Mammary epithelial cell (primary cell): ENCODE measurements at regions of chr12 and their contacts with region 1.

Region 1: GRCh38 chr12:55817346-55818139 is at the starts of genes ORMDL2 and SARNP:
- DNase-seq: peak; percentile 100
- H3K4me3 ChIP-seq: peak within 1 kb of the TSS; percentile 76 to 95 (median 90)
- H3K27ac ChIP-seq: peak within 1 kb of the TSS; percentile 93
- H3K4me1 ChIP-seq: peaks cover 18% of the 10 kb centered on the region
- H3K27me3 ChIP-seq: no peaks in the 10 kb centered on the region
- CTCF ChIP-seq: no peak
- total RNA-seq, gene ORMDL2: 24.3 to 91.3 TPM
- total RNA-seq, gene SARNP: 34.7 to 72.9 TPM

Region 2: GRCh38 chr12:55548756-55549155 is 268.8 kb before region 1 on chr12:
- CTCF ChIA-PET with region 1: no interaction called
- dilution Hi-C with region 1: no loop called
- in situ Hi-C with region 1: no loop called
- intact Hi-C with region 1: no loop called
- DNase-seq: no peak
- H3K4me3 ChIP-seq: no peak overlapping the region
- H3K27ac ChIP-seq: no peak overlapping the region
- H3K4me1 ChIP-seq: no peaks in the 10 kb centered on the region
- H3K27me3 ChIP-seq: no peaks in the 10 kb centered on the region
- CTCF ChIP-seq: no peak

Region 3: GRCh38 chr12:55829967-55830600 is 12.5 kb after region 1 on chr12:
- CTCF ChIA-PET with region 1: no interaction called
- dilution Hi-C with region 1: no loop called
- in situ Hi-C with region 1: no loop called
- intact Hi-C with region 1: loop called (anchors 1 kb)
- DNase-seq: no peak
- H3K4me3 ChIP-seq: peak overlapping the region; percentile 81 to 88 (median 83)
- H3K27ac ChIP-seq: peak overlapping the region; percentile 75
- H3K4me1 ChIP-seq: peaks cover 8% of the 10 kb centered on the region
- H3K27me3 ChIP-seq: no peaks in the 10 kb centered on the region
- CTCF ChIP-seq: no peak

Region 4: DNA sequence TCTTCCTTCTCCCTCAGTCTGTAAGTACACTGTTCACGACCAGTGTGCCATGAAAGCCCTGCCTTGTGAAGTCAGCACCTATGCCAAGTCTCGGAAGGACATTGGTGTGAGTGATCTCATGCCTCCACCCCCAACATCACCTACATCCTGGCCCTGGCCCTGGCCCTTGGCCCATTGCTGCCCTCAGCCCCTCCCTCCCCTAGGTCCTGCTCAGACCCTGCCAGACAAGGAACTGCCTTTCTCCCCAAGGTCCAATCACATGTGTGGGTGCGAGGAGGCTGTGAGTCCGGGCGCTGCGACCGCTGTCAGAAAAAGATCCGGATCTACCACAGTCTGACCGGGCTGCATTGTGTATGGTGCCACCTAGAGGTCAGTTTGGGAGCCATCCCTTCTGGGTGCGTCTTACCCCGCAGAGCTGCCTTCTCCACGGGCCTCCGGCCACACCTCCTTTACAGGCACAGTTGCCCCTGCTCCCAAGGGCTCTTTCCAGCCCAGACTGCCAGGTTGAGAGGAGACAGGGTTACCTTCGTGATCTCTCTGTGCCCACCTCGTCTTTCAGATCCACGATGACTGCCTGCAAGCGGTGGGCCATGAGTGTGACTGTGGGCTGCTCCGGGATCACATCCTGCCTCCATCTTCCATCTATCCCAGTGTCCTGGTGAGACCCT is 122.7 kb after region 1 on chr12:
- CTCF ChIA-PET with region 1: no interaction called
- dilution Hi-C with region 1: no loop called
- in situ Hi-C with region 1: loop called in 1 of 2 experiments (anchors 5 kb)
- intact Hi-C with region 1: loop called (anchors 1 kb)
- DNase-seq: peak; percentile 82
- H3K4me3 ChIP-seq: no peak overlapping the region
- H3K27ac ChIP-seq: peak overlapping the region; percentile 97
- H3K4me1 ChIP-seq: peaks cover 48% of the 10 kb centered on the region
- H3K27me3 ChIP-seq: no peaks in the 10 kb centered on the region
- CTCF ChIP-seq: peak; percentile 88 to 94

Region 5: DNA sequence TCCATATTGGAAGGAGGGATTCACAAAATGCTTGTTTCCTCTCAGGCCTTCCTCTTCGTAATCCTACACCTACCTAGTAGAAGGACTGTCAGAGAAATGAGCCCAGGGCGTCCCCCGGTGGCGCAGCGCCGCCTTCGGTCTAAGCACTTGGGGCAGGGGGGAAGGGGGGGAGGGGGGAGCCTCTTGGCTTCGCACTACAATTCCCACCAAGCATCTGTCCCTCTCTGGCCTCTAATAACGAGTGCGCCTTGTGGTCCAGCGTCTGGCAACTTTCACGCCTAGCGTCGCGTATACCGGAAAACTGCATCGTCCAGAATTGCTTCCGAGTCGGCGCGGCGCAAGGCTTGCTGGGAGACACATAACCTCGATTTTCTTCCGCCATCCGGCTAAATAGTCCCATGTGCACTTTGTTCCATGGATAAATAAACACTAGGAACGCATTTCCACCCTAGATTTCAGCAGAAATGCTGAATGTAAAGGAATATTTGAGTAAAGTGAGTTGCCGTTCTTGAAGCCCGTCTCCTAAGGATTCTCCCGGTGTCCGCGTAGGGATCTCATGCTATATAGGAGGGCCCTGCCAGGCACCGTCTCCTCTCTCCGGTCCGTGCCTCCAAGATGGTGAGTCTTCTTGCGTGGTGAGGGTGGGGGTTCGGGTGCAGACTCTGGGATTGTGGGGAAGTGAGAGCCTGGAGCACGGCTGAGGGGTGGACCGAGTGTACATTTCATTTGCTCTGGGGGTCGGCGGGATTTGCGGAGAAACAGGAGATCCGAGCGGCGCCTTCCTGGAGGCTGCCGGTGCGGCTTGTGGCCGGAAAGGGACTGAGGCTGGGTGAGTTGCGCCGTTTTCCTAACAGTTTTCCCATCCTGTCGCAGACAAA is 224.2 kb after region 1 on chr12 and contains the start of gene RPS26:
- CTCF ChIA-PET with region 1: no interaction called
- dilution Hi-C with region 1: no loop called
- in situ Hi-C with region 1: no loop called
- intact Hi-C with region 1: loop called (anchors 5 kb)
- DNase-seq: peak; percentile 99
- H3K4me3 ChIP-seq: peak within 1 kb of the TSS; percentile 78 to 91 (median 86)
- H3K27ac ChIP-seq: peak within 1 kb of the TSS; percentile 91
- H3K4me1 ChIP-seq: peaks cover 19% of the 10 kb centered on the region
- H3K27me3 ChIP-seq: no peaks in the 10 kb centered on the region
- CTCF ChIP-seq: peak; percentile 16 to 54
- total RNA-seq, gene RPS26: 46.4 to 331 TPM